ENCODE measurements at regions of chr18 and their contacts with region 1.

Region 1: DNA sequence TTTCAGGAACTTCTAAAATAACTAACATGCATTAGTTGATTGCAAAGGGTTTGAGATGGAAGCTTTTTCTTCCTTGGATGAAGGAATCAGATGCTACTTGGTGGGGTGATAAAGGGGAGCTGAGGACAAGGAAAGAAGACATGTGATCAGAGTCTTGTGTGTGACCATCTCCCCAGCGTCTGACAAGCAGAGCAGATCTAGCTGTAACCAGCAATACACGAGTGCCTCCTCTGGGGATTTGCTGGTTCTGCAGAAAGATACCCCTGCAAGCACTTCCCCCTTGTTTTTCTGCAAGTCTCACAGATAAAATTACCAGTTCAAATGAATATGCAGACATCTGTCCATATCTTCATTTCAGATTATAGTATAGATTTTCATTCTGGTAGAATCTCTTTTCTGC is 2.7 kb downstream of the CDH7 start:
- DNase-seq: no peak
- ATAC-seq: no peak
- H3K4me3 Mint-ChIP-seq: no peak overlapping the region
- H3K27ac Mint-ChIP-seq: no peak overlapping the region
- H3K4me1 Mint-ChIP-seq: no peaks in the 10 kb centered on the region
- H3K27me3 Mint-ChIP-seq: peaks cover 7% of the 10 kb centered on the region
- CTCF ChIP-seq: no peak

Region 2: DNA sequence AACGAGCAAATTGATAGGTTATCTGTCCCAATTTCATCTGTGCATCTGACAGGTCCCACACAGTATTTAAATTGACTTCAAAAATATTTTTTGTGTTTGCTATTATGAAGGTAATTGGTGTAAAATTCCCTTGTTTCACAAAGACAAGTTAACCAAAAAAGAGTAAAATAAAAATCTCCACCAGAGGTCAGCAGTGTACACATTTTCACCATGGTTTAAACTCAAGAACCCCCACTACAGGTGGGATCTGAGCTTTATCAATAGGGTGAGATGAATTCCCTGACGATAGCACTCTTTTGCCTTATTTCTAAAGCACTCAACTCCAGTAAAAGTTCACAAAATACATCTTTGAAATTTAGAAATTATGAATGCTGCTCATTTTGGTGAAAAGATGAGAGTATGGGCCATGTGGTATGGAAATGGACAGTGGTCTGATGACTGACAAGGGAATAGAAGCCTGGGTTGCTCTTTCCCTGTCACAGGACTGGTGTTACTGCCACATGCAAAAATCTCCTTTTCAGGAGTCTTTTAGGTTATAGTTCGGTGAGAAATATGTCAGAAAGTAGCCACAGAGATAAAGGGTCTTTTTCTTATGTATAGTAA is 1715.6 kb before region 1 on chr18:
- CTCF ChIA-PET with region 1: no interaction called
- POLR2A ChIA-PET with region 1: no interaction called
- intact Hi-C with region 1: loop called (anchors 5 kb)
- DNase-seq: no peak
- ATAC-seq: peak; percentile 56
- H3K4me3 Mint-ChIP-seq: no peak overlapping the region
- H3K27ac Mint-ChIP-seq: no peak overlapping the region
- H3K4me1 Mint-ChIP-seq: no peaks in the 10 kb centered on the region
- H3K27me3 Mint-ChIP-seq: peaks cover 2% of the 10 kb centered on the region
- CTCF ChIP-seq: no peak

Region 3: GRCh38 chr18:65704046-65704445 is 49.5 kb before region 1 on chr18:
- CTCF ChIA-PET with region 1: no interaction called
- POLR2A ChIA-PET with region 1: no interaction called
- intact Hi-C with region 1: no loop called
- DNase-seq: no peak
- ATAC-seq: no peak
- H3K4me3 Mint-ChIP-seq: no peak overlapping the region
- H3K27ac Mint-ChIP-seq: no peak overlapping the region
- H3K4me1 Mint-ChIP-seq: no peaks in the 10 kb centered on the region
- H3K27me3 Mint-ChIP-seq: no peaks in the 10 kb centered on the region
- CTCF ChIP-seq: no peak

Region 4: GRCh38 chr18:66150650-66151049 is 397.1 kb after region 1 on chr18:
- CTCF ChIA-PET with region 1: no interaction called
- POLR2A ChIA-PET with region 1: no interaction called
- intact Hi-C with region 1: no loop called
- DNase-seq: no peak
- ATAC-seq: no peak
- H3K4me3 Mint-ChIP-seq: no peak overlapping the region
- H3K27ac Mint-ChIP-seq: no peak overlapping the region
- H3K4me1 Mint-ChIP-seq: no peaks in the 10 kb centered on the region
- H3K27me3 Mint-ChIP-seq: no peaks in the 10 kb centered on the region
- CTCF ChIP-seq: no peak